Tibial artery (tissue), 4 donors: ENCODE measurements at regions of chr2 and their contacts with region 1.

Region 1: GRCh38 chr2:10043906-10044601 is 704 bp downstream of the KLF11 start:
- DNase-seq: peak; percentile 97 to 99
- H3K4me3 ChIP-seq: peak overlapping the region; percentile 70 to 81
- H3K27ac ChIP-seq: peak overlapping the region; percentile 91 to 94
- H3K4me1 ChIP-seq: peaks cover 0 to 71% (median 47%) of the 10 kb centered on the region in 4 donors
- H3K27me3 ChIP-seq: no peaks in the 10 kb centered on the region
- CTCF ChIP-seq: peak in 1 of 2 experiments; percentile 18

Region 2: GRCh38 chr2:9813312-9814133 is 230.5 kb before region 1 on chr2:
- intact Hi-C with region 1: loop called (anchors 5 kb)
- DNase-seq: peak; percentile 53 to 77
- H3K4me3 ChIP-seq: peak overlapping the region in 1 of 2 donors; percentile 3
- H3K27ac ChIP-seq: no peak overlapping the region
- H3K4me1 ChIP-seq: peaks cover 0 to 19% (median 12%) of the 10 kb centered on the region in 4 donors
- H3K27me3 ChIP-seq: peaks cover 0 to 9% of the 10 kb centered on the region in 2 donors
- CTCF ChIP-seq: peak; percentile 87 to 93

Region 3: GRCh38 chr2:9984217-9984739 is 59.8 kb before region 1 on chr2:
- intact Hi-C with region 1: loop called (anchors 2 kb)
- DNase-seq: no peak
- H3K4me3 ChIP-seq: no peak overlapping the region
- H3K27ac ChIP-seq: peak overlapping the region; percentile 67 to 68
- H3K4me1 ChIP-seq: peaks cover 0 to 48% (median 26%) of the 10 kb centered on the region in 4 donors
- H3K27me3 ChIP-seq: no peaks in the 10 kb centered on the region
- CTCF ChIP-seq: peak; percentile 81 to 89

Region 4: DNA sequence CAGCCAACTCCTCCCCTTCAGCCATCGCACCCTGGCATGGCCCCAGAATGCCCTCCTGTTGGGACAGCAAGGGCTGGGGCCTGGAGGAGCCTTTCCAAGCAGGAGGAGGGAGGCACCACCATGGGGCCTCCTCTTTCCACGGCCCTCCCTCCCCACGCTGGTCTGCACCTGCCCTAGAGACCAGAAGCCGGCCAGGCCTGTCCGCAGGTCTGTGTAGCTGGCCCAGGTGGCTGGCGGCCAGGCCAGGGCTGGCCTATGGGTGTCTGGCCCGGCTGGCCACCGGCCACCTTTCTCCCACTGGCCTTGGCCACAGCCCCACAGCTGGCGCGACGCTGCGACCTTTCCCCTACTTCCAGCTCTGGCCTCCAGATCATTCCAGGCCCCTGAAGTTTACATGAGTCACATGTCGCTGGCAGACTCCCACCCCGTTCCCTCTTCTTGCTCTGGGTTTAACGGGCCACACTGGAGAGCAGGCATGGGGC is 34.2 kb before region 1 on chr2:
- intact Hi-C with region 1: loop called (anchors 5 kb)
- DNase-seq: peak; percentile 68 to 92
- H3K4me3 ChIP-seq: no peak overlapping the region
- H3K27ac ChIP-seq: peak overlapping the region; percentile 73 to 84
- H3K4me1 ChIP-seq: peaks cover 3 to 49% (median 45%) of the 10 kb centered on the region in 4 donors
- H3K27me3 ChIP-seq: no peaks in the 10 kb centered on the region
- CTCF ChIP-seq: no peak